Heart left ventricle (tissue), 16 donors: ENCODE measurements at regions of chr10 and their contacts with region 1.

Region 1: GRCh38 chr10:49759787-49760551 is 2.2 kb downstream of the OGDHL start:
- DNase-seq: peak in 1 of 5 donors; percentile 60
- ATAC-seq: no peak
- H3K4me3 ChIP-seq: no peak overlapping the region
- H3K27ac ChIP-seq: no peak overlapping the region
- H3K4me1 ChIP-seq: peaks cover 0 to 10% (median 0%) of the 10 kb centered on the region in 12 donors
- H3K27me3 ChIP-seq: peaks cover 0 to 33% (median 9%) of the 10 kb centered on the region in 9 donors
- CTCF ChIP-seq: no peak
- POLR2A ChIP-seq: no peak

Region 2: GRCh38 chr10:49606981-49607535 is 152.9 kb before region 1 on chr10:
- intact Hi-C with region 1: loop called in 1 of 10 experiments (anchors 10 kb)
- DNase-seq: peak; percentile 56 to 87 (median 72)
- ATAC-seq: peak; percentile 66 to 83 (median 75)
- H3K4me3 ChIP-seq: no peak overlapping the region
- H3K27ac ChIP-seq: no peak overlapping the region
- H3K4me1 ChIP-seq: peaks cover 0 to 41% (median 4%) of the 10 kb centered on the region in 12 donors
- H3K27me3 ChIP-seq: peaks cover 25 to 75% (median 49%) of the 10 kb centered on the region in 9 donors
- CTCF ChIP-seq: no peak
- POLR2A ChIP-seq: no peak

Region 3: DNA sequence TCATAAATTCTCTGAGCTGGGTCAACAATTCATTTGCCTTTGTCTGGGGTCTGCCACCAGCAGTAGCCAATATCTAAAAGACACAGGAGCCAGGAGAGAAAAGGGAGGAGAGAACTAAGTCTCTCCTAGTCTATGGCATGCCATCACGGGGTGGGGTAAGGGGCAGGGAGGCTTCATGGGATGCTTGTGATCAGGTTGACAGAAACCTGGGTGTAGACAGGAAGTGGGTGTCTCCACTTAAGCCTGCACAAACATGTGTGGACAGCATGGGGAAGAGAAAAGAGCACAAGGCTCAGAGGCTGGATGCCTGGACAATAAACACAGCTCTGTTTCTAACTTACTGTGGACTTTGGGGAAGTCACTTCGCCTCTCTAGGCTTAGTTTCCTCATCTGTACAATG is 92.0 kb before region 1 on chr10:
- intact Hi-C with region 1: no loop called
- DNase-seq: no peak
- ATAC-seq: no peak
- H3K4me3 ChIP-seq: no peak overlapping the region
- H3K27ac ChIP-seq: no peak overlapping the region
- H3K4me1 ChIP-seq: no peaks in the 10 kb centered on the region
- H3K27me3 ChIP-seq: peaks cover 0 to 21% (median 2%) of the 10 kb centered on the region in 9 donors
- CTCF ChIP-seq: no peak
- POLR2A ChIP-seq: no peak